Endothelial cell of umbilical vein (primary cell): ENCODE measurements at regions of chr19 and their contacts with region 1.

Region 1: GRCh38 chr19:14517840-14518505 is at the start of gene DNAJB1:
- DNase-seq: peak; percentile 78
- H3K4me3 ChIP-seq: peak within 1 kb of the TSS; percentile 59 to 93 (median 85)
- H3K27ac ChIP-seq: peak within 1 kb of the TSS; percentile 91
- H3K4me1 ChIP-seq: peaks cover 47% of the 10 kb centered on the region
- H3K27me3 ChIP-seq: no peaks in the 10 kb centered on the region
- CTCF ChIP-seq: no peak
- POLR2A ChIP-seq: peak; percentile 99
- total RNA-seq, gene DNAJB1: 55.8 and 58.6 TPM in 2 replicates

Region 2: DNA sequence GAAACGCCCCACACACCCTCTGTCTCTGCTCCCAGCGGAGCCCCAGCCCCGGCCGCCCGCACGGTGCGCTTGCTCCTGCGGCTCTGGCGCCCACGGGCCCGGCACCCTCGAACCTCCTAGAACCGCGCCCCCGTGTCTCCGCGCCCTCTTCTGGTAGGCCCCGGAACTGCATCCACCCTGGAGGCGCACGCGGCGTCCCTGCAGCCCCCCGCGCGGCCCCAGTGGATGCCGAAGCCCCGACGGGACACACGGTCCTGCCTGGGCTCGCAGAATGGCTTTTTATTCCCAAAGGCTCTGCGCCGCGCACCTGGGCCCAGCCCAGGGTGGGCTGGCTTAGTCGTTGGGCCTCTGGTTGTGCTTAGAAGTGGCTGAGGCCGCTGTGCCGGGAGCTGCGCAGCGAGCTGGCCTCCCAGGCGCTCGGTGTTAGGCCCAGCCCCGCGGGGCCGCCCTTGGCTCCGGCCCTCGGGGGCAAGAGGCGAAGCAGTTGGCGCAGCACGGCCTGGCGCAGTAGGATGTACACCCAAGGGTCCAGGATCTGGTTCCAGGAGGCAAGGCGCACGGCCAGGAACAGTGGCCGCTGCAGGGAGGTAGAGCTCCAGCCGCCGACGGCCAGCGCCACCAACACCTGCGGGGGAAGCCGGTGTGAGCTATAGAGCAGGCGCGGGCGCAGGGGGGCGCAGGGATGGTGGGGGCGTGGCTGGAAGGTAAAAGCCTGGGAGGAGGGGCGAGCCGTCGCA is 45.6 kb before region 1 on chr19:
- CTCF ChIA-PET with region 1: interaction called, 12 read pairs
- POLR2A ChIA-PET with region 1: interaction called, 6 read pairs
- dilution Hi-C with region 1: no loop called
- intact Hi-C with region 1: no loop called
- DNase-seq: peak; percentile 51
- H3K4me3 ChIP-seq: no peak overlapping the region
- H3K27ac ChIP-seq: no peak overlapping the region
- H3K4me1 ChIP-seq: peaks cover 24% of the 10 kb centered on the region
- H3K27me3 ChIP-seq: no peaks in the 10 kb centered on the region
- CTCF ChIP-seq: peak; percentile 96 to 97
- POLR2A ChIP-seq: no peak

Region 3: GRCh38 chr19:14496028-14496833 is 21.7 kb before region 1 on chr19 and contains the start of gene GIPC1:
- CTCF ChIA-PET with region 1: interaction called, 6 read pairs
- POLR2A ChIA-PET with region 1: interaction called, 22 read pairs
- dilution Hi-C with region 1: no loop called
- intact Hi-C with region 1: loop called (anchors 1 kb)
- DNase-seq: peak; percentile 99
- H3K4me3 ChIP-seq: peak within 1 kb of the TSS; percentile 50 to 95 (median 68)
- H3K27ac ChIP-seq: no peak within 1 kb of the TSS
- H3K4me1 ChIP-seq: peaks cover 23% of the 10 kb centered on the region
- H3K27me3 ChIP-seq: no peaks in the 10 kb centered on the region
- CTCF ChIP-seq: no peak
- POLR2A ChIP-seq: no peak
- total RNA-seq, gene GIPC1: 102 and 108 TPM in 2 replicates

Region 4: GRCh38 chr19:14529254-14530004 is 11.5 kb after region 1 on chr19 and contains the start of gene TECR:
- CTCF ChIA-PET with region 1: interaction called, 4 read pairs
- POLR2A ChIA-PET with region 1: interaction called, 5 read pairs
- dilution Hi-C with region 1: no loop called
- intact Hi-C with region 1: loop called (anchors 1 kb)
- DNase-seq: peak; percentile 100
- H3K4me3 ChIP-seq: peak within 1 kb of the TSS; percentile 24 to 90 (median 67)
- H3K27ac ChIP-seq: peak within 1 kb of the TSS; percentile 27
- H3K4me1 ChIP-seq: peaks cover 7% of the 10 kb centered on the region
- H3K27me3 ChIP-seq: no peaks in the 10 kb centered on the region
- CTCF ChIP-seq: no peak
- POLR2A ChIP-seq: peak; percentile 94
- total RNA-seq, gene TECR: 109 and 110 TPM in 2 replicates